GM18951 (cell line): ENCODE measurements at regions of chr15 and their contacts with region 1.

Region 1: GRCh38 chr15:65286704-65287519 is at the start of gene PARP16:
- POLR2A ChIP-seq: peak; percentile 80

Region 2: DNA sequence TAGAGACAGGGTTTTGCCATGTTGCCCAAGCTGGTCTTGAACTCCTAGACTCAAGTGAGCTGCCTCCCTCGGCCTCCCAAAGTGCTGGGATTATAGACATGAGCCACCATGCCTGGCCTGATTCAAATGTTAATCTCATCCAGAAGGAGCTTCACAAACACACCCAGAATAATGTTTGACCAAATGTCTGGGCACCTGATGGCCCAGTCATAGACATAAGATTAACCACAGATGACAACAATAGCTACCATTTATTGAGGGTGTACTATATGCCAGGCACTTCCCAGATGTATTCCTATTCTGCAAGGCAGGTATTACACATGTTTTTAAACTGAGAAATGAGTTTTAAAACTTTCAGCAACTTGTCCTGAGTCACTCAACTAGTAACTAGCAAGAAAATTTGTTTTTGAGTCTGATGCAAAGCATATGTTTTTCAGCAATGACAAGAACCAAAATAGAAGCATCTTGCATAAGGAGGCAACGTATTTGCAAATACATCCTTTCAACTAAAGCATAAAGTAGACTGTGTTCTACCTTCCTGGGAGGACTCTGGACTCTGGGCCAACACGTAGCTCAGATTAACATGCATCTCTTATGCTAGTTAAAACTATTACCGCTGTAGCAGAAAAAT is 289.1 kb before region 1 on chr15:
- in situ Hi-C with region 1: no loop called
- POLR2A ChIP-seq: no peak

Region 3: DNA sequence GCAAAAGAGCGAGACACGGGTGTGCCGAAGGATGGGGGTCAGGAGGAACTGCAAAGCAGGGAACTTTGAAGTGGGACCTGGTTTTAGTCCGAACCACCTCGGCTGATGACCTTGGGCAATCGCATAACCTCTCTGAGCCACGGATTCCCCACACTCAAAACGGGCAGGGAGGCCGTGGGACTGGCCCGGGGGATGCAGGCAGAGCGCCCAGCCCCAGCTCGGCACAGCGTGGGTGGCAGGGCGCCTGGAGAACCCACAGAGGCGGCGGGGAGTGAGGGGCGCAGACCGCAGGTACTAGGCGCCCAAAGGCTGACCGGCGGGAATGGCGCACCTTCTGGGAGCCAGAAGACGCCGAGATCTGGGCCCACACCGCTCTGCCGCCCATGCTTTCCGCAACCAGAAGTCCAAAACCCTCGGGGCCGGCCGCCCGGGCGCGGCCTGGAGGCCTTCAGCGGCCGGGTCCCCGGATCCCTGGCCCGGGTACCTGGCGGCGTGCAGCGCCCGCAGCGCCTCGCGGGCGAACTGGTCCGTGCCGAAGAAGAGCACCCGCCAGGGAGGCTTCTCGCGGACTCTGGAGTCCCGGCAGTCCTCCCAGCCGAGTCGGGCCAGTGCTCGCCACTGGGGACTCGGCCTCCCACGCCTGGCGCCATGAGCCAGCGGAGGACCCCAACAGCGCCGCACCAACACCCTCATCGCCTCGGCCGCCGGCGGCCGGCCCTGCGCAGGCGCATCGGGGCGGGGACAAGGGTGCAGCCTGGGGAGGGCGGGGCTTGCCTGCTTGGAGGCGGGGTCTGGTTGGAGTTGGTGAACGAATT is 257.8 kb before region 1 on chr15 and contains the start of gene MTFMT:
- in situ Hi-C with region 1: loop called (anchors 25 kb)
- POLR2A ChIP-seq: peak; percentile 97

Region 4: DNA sequence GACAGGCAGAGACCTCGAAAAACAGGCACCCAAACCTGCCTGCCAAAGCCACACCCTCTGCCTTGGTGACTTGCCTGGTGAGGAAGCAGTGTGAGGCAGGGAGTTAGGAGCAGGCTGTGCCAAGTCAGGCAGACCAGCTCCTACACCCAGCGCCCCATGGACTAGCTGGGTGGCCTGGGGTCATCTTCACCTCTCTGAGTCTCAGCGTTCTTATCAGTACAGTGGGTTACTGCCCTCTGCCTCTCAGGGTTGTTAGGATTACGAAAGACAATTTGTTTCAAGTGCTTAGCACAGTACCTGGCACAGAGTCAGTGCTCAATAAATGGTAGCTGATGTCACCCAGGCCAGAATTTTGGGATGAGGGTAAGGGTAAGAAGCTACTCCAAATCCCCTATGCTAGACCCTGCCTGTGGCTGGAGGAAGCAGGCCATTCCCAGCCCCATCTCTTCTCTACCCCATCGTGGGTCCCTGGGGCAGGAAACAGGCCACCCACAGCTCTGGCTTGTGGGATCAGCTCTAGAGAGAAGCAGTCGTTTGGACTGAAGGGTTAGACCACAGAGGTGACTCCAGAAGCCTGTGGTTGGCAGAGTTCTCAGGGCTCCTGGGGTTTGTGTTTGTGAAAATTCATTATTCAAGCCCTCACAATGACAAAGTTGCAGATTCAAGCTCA is 231.6 kb before region 1 on chr15:
- in situ Hi-C with region 1: no loop called
- POLR2A ChIP-seq: no peak

Region 5: GRCh38 chr15:65192016-65192415 is 94.9 kb before region 1 on chr15:
- in situ Hi-C with region 1: loop called (anchors 10 kb)
- POLR2A ChIP-seq: no peak